ENCODE measurements at regions of chr13 and their contacts with region 1.

Region 1: DNA sequence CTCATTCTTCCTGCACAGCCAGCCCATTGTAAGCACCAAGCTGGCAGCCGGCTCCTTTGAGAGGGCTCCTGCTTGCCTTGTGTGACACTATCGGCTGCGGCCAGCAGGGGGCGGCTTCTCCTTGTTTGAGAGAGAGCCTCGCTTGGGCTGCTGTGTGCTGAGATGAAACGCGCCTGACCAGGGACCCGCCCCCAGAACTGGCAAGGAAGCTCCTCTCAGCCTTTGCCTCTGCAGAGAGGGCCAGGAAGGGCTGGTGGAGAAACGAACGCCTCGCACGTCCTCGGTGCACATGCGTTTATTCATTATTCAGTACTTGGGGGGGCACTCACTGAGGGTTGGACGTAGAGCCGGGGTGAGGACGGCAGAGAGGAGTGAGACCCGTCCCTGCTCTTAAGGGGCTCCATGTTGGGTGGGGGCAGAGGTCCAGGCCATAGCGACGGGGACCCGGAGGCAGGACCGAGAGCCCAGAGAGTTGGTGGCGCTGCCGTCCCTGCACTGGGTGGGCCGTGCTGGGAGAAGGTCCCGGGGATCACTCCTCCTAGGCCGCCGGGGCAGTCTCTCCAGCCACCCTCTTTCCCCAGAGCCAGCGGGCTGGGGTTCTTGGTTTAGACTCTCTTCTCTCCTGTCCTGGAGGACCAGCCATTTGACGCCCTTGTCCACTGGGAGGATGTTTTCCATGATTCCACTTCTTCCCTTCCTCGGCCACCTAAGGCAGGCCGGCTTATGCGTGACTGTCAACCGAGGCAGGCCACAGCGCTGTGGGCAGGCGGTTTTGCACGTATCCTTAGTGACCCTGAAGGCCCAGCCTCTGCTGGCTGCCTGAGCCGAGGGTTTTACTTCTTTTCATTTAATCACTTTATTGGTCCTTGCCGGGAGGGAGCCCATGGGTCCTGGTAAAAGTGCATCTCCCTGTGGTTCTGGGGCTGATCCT is 174.5 kb downstream of the KATNAL1 start:
- DNase-seq: peak; percentile 76 to 82
- ATAC-seq: peak; percentile 96 to 100
- H3K4me3 ChIP-seq: no peak overlapping the region
- H3K27ac ChIP-seq: peak overlapping the region in 1 of 2 experiments; percentile 71; a peak in 2 of 6 replicates
- H3K4me1 ChIP-seq: no peaks in the 10 kb centered on the region
- CTCF ChIP-seq: peak; percentile 69
- EP300 ChIP-seq: no peak
- POLR2A ChIP-seq: no peak
- RAD21 ChIP-seq: peak; percentile 86 to 87

Region 2: DNA sequence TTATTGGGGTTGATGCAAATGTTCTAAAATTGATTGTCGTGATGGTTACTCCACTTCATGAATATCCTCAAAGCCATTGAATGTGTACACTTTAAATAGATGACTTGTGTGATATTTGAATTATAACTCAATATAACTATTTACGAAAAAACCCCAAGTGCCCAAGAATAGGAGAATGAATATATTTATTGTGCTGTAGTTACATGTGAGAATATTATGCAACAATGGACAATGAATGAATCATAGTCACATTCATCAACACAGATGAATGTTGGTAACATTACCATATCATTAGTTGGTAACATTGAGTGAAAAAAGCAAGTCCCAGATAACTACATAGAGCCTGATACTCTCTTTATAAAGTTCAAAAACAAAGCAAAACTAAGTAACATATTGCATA is 154.7 kb before region 1 on chr13:
- CTCF ChIA-PET with region 1: no interaction called
- POLR2A ChIA-PET with region 1: no interaction called
- DNase-seq: no peak
- ATAC-seq: no peak
- H3K4me3 ChIP-seq: no peak overlapping the region
- H3K27ac ChIP-seq: no peak overlapping the region
- H3K4me1 ChIP-seq: no peaks in the 10 kb centered on the region
- CTCF ChIP-seq: no peak
- EP300 ChIP-seq: no peak
- POLR2A ChIP-seq: no peak
- RAD21 ChIP-seq: no peak

Region 3: DNA sequence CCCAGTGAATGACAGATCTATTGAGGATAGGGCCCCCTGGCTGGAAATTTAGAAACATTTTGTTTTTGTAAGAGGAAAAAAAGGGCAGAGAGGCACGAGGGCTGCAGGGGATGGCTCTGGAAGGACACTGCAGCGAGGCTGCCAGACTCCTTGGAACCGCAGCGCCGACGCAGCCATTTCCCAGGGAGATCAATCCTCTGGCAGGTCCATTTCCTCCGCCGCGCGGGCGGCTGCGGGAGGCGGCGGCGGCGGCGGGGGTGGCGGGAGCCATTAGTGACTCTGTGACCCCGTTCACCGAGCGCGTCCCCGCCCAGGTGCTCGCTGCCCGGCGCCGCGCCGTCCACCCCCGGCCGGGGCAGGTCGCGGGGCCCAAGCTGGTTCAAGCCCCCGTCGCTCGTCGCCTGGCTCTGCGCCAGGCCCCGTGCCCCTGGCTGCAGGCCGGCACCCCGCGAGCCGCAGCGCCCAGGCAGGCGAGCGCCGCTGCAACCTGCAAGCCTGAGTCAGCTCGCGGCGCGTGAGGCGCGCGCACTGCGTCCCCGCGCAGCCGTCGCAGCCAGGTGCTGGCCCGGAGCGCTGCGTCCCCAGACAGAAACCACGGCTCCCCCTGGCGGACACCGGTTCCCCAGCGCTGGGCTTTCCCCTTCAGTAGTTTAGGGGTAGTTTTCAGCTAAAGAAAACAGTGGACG is 18.2 kb before region 1 on chr13:
- CTCF ChIA-PET with region 1: interaction called, 49 read pairs
- POLR2A ChIA-PET with region 1: no interaction called
- DNase-seq: peak; percentile 60 to 80
- ATAC-seq: peak; percentile 88 to 91
- H3K4me3 ChIP-seq: peak overlapping the region; percentile 65
- H3K27ac ChIP-seq: peak overlapping the region; percentile 87 to 99
- H3K4me1 ChIP-seq: peaks cover 13% of the 10 kb centered on the region
- CTCF ChIP-seq: peak; percentile 71
- EP300 ChIP-seq: no peak
- POLR2A ChIP-seq: peak; percentile 66
- RAD21 ChIP-seq: peak; percentile 74 to 84

Region 4: GRCh38 chr13:30153545-30154441 is 20.9 kb after region 1 on chr13:
- CTCF ChIA-PET with region 1: interaction called, 38 read pairs
- POLR2A ChIA-PET with region 1: no interaction called
- DNase-seq: no peak
- ATAC-seq: no peak
- H3K4me3 ChIP-seq: no peak overlapping the region
- H3K27ac ChIP-seq: no peak overlapping the region
- H3K4me1 ChIP-seq: no peaks in the 10 kb centered on the region
- CTCF ChIP-seq: no peak
- EP300 ChIP-seq: no peak
- POLR2A ChIP-seq: no peak
- RAD21 ChIP-seq: no peak

Region 5: GRCh38 chr13:30395192-30396084 is 262.6 kb after region 1 on chr13:
- CTCF ChIA-PET with region 1: interaction called, 10 read pairs
- POLR2A ChIA-PET with region 1: interaction called, 3 read pairs
- DNase-seq: peak; percentile 53 to 88
- ATAC-seq: peak; percentile 88 to 90
- H3K4me3 ChIP-seq: peak overlapping the region; percentile 55
- H3K27ac ChIP-seq: peak overlapping the region; percentile 87 to 89
- H3K4me1 ChIP-seq: peaks cover 11% of the 10 kb centered on the region
- CTCF ChIP-seq: no peak
- EP300 ChIP-seq: peak in 1 of 2 experiments; percentile 21; a peak in 1 of 5 replicates
- POLR2A ChIP-seq: no peak; the same call in 1 of the 2 replicates
- RAD21 ChIP-seq: no peak

Region 6: GRCh38 chr13:30465585-30466357 is 332.9 kb after region 1 on chr13 and contains the start of gene HMGB1:
- CTCF ChIA-PET with region 1: interaction called, 10 read pairs
- POLR2A ChIA-PET with region 1: interaction called, 3 read pairs
- DNase-seq: peak; percentile 92 to 97
- ATAC-seq: peak; percentile 97 to 99
- H3K4me3 ChIP-seq: peak within 1 kb of the TSS; percentile 100
- H3K27ac ChIP-seq: peak within 1 kb of the TSS; percentile 98 to 100
- H3K4me1 ChIP-seq: peaks cover 24% of the 10 kb centered on the region
- CTCF ChIP-seq: no peak
- EP300 ChIP-seq: no peak
- POLR2A ChIP-seq: peak; percentile 50
- RAD21 ChIP-seq: no peak
- polyA plus RNA-seq, gene HMGB1: 295 and 353 TPM in 2 replicates

Measured in A549 (cell line).